ENCODE measurements at regions of chr22 and their contacts with region 1.

Region 1: GRCh38 chr22:35995772-35996171 is 32.9 kb downstream of the RBFOX2 start:
- DNase-seq: peak; percentile 50 to 72
- ATAC-seq: peak; percentile 87 to 90
- H3K4me3 ChIP-seq: no peak overlapping the region
- H3K27ac ChIP-seq: peak overlapping the region; percentile 51 to 66 (median 58)
- H3K4me1 ChIP-seq: peaks cover 9 to 10% of the 10 kb centered on the region in 2 donors
- H3K27me3 ChIP-seq: no peaks in the 10 kb centered on the region
- CTCF ChIP-seq: no peak
- POLR2A ChIP-seq: no peak

Region 2: GRCh38 chr22:35966314-35967045 is 29.3 kb before region 1 on chr22:
- in situ Hi-C with region 1: no loop called
- intact Hi-C with region 1: loop called (anchors 1 kb)
- DNase-seq: no peak
- ATAC-seq: no peak
- H3K4me3 ChIP-seq: no peak overlapping the region
- H3K27ac ChIP-seq: no peak overlapping the region
- H3K4me1 ChIP-seq: peaks cover 11 to 19% of the 10 kb centered on the region in 2 donors
- H3K27me3 ChIP-seq: no peaks in the 10 kb centered on the region
- CTCF ChIP-seq: no peak
- POLR2A ChIP-seq: no peak

Measured in gastrocnemius medialis (tissue), 4 donors.